ENCODE measurements at regions of chr17 and their contacts with region 1.

Region 1: DNA sequence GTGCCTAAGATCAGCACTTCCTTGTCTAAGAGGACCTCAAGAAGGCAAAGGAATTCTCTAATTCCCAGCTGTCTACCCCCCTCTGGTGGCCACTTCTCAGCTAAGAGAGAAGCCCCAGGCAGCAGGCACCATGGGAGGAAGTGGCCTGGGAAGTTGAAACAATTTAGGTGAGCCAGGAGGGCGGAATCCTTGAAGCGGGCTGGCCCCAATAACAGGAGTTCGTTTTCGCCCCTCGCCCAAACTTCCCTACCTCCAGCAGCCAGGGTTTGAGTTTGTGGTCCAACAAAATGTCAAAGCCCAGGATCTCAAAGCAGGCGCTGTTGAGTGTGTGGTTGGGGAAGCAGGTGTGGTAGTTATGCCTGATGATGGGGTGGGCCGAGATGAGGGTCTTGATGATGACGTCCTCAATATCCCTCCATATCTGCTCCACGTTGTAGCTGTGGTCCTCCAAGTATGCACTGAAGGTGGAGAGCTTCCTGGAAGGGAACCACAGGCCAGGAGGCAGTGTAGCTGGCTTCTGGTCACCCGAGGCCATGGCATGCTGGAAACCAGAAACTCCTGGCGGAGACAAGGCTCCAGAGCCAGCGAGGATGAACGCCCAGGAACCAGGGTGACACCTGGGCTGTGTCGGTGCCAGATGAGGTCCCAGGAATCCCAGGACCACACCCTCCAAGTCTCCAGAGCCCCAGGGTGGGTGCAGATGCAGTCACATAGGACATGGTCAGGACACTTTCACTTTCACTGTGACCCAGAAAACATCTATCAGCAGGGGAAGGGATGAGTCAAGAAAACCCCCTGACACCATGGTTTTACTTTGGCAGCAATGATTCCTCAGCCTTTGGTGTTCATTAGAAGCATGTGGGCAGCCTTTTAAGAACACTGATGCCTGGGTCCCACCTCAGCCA is 25.6 kb downstream of the TTLL6 start:
- DNase-seq: peak; percentile 55
- H3K4me3 ChIP-seq: no peak overlapping the region
- H3K27ac ChIP-seq: no peak overlapping the region
- H3K27me3 ChIP-seq: peaks cover 42% of the 10 kb centered on the region
- CTCF ChIP-seq: peak; percentile 91

Region 2: GRCh38 chr17:48441231-48441711 is 350.1 kb before region 1 on chr17:
- CTCF ChIA-PET with region 1: no interaction called
- POLR2A ChIA-PET with region 1: no interaction called
- DNase-seq: no peak
- H3K4me3 ChIP-seq: no peak overlapping the region
- H3K27ac ChIP-seq: no peak overlapping the region
- H3K27me3 ChIP-seq: peaks cover 44% of the 10 kb centered on the region
- CTCF ChIP-seq: no peak

Region 3: DNA sequence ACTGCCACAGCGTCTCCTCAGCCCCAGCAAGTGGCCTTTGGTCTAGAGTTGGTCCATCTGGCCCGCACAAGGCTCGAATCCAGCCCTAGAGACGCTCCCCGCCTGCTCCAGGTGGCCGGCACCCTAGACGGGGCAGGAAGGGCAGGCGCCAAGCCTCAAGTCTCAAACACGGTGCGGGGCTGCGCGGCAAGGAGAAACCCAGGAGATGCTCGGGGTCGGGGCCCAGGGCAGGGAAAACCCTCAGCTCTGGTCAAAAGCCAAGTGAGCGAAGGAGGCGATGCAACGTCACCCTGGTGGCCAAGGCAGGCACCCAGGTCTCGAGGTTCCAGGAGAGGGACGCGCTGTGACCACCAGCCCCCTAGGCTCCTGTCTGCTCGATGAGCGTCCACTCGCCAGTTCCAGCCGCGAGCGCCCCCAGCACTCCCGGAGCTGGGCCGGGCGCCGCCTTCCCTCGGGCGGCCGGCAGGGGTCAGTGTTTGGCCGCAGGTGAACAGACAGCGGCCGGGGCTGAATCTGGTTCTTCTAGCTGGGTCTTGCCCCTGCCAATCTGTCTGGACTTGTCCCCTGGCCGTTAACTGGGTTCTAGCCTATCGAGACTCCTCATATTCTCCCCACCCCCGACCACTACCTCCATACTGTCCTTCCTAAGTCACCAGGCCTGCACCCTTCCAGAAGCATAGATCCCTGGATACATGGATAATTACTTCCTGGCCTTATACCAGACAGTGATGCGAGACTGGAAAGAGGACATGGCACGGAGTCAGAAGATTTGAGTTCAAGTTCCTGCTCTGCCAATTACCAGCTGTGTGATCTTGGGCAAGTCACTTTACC is 113.0 kb before region 1 on chr17:
- CTCF ChIA-PET with region 1: interaction called, 45 read pairs
- POLR2A ChIA-PET with region 1: no interaction called
- DNase-seq: no peak
- H3K4me3 ChIP-seq: no peak overlapping the region
- H3K27ac ChIP-seq: no peak overlapping the region
- H3K27me3 ChIP-seq: peaks cover 25% of the 10 kb centered on the region
- CTCF ChIP-seq: peak; percentile 84

Region 4: GRCh38 chr17:48745381-48746275 is 45.8 kb before region 1 on chr17:
- CTCF ChIA-PET with region 1: interaction called, 11 read pairs
- POLR2A ChIA-PET with region 1: no interaction called
- DNase-seq: no peak
- H3K4me3 ChIP-seq: no peak overlapping the region
- H3K27ac ChIP-seq: no peak overlapping the region
- H3K27me3 ChIP-seq: peaks cover 92% of the 10 kb centered on the region
- CTCF ChIP-seq: no peak

Region 5: DNA sequence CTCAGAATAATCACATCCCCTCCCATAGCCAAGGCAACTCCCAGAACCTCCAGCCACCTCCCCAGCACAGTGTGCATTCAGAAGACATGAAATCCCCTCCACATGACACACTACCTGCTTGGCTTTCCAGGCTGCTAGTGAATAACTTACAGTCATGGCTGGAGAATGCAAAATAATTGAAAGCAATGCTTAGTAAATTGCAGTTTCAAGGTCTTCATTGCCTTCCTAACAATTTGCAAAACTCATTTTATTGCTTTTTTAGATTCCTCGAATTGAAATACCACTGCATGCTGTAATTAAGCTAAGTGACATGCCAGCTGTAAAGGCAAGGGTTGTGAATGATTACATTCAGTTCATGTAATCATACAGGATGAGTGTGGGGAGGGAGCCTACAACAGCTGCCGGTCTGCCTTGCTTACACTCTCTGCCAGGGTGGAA is 33.8 kb before region 1 on chr17:
- CTCF ChIA-PET with region 1: no interaction called
- POLR2A ChIA-PET with region 1: no interaction called
- DNase-seq: no peak
- H3K4me3 ChIP-seq: no peak overlapping the region
- H3K27ac ChIP-seq: no peak overlapping the region
- H3K27me3 ChIP-seq: peaks cover 69% of the 10 kb centered on the region
- CTCF ChIP-seq: no peak